Colonic mucosa (tissue), 4 donors: ENCODE measurements at regions of chr1 and their contacts with region 1.

Region 1: GRCh38 chr1:155227261-155228095 is 19.0 kb downstream of the MTX1 start:
- DNase-seq: peak; percentile 99
- H3K4me3 ChIP-seq: peak overlapping the region; percentile 67
- H3K27ac ChIP-seq: peak overlapping the region; percentile 89
- H3K4me1 ChIP-seq: peaks cover 10% of the 10 kb centered on the region
- H3K27me3 ChIP-seq: no peaks in the 10 kb centered on the region
- CTCF ChIP-seq: no peak

Region 2: GRCh38 chr1:155208541-155209311 is 18.8 kb before region 1 on chr1 and contains the start of gene MTX1:
- intact Hi-C with region 1: loop called (anchors 2 kb)
- DNase-seq: peak; percentile 90
- H3K4me3 ChIP-seq: peak within 1 kb of the TSS; percentile 72
- H3K27ac ChIP-seq: peak within 1 kb of the TSS; percentile 91
- H3K4me1 ChIP-seq: peaks cover 13% of the 10 kb centered on the region
- H3K27me3 ChIP-seq: no peaks in the 10 kb centered on the region
- CTCF ChIP-seq: no peak
- total RNA-seq, gene MTX1: 37.5 to 55.8 TPM

Region 3: GRCh38 chr1:155308493-155309422 is 81.3 kb after region 1 on chr1 and contains the start of gene FDPS:
- intact Hi-C with region 1: no loop called
- DNase-seq: peak; percentile 99
- H3K4me3 ChIP-seq: peak within 1 kb of the TSS; percentile 49
- H3K27ac ChIP-seq: peak within 1 kb of the TSS; percentile 84
- H3K4me1 ChIP-seq: peaks cover 3% of the 10 kb centered on the region
- H3K27me3 ChIP-seq: no peaks in the 10 kb centered on the region
- CTCF ChIP-seq: no peak
- total RNA-seq, gene FDPS: 300 to 501 TPM

Region 4: DNA sequence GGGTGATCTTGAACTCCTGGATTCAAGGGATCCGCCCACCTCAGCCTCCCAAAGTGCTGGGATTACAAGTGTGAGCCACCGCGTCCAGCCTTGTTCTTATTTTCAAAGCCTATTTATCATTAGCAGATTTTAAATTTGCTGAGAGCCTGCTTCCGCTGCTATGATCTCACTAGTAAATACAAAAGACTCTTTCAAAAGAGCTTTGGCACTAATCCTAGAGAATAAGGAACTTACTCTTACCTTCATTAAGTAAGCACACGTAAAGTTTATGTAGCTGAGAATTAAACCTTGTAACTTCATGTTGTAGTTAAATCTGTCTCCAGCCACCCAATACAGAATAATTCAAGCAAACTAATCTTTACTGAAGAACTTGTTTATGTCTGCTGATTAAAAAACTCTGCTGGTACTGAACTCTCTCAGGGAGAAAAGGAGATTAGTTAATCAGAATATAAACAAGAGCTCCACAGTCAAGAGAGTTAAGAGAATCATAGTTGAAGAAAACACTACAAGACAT is 165.5 kb after region 1 on chr1:
- intact Hi-C with region 1: no loop called
- DNase-seq: no peak
- H3K4me3 ChIP-seq: no peak overlapping the region
- H3K27ac ChIP-seq: no peak overlapping the region
- H3K4me1 ChIP-seq: no peaks in the 10 kb centered on the region
- H3K27me3 ChIP-seq: no peaks in the 10 kb centered on the region
- CTCF ChIP-seq: no peak